ENCODE measurements at regions of chr2 and their contacts with region 1.

Region 1: GRCh38 chr2:203583701-203584100 is 48.6 kb upstream of the RAPH1 start:
- DNase-seq: no peak
- H3K4me3 ChIP-seq: no peak overlapping the region
- H3K27ac ChIP-seq: peak overlapping the region; percentile 69 to 76
- H3K4me1 ChIP-seq: peaks cover 3 to 73% (median 48%) of the 10 kb centered on the region in 4 donors
- H3K27me3 ChIP-seq: no peaks in the 10 kb centered on the region
- CTCF ChIP-seq: no peak

Region 2: GRCh38 chr2:203535078-203535783 is 48.5 kb before region 1 on chr2 and contains the start of gene RAPH1:
- intact Hi-C with region 1: loop called (anchors 5 kb)
- DNase-seq: peak; percentile 78 to 89
- H3K4me3 ChIP-seq: peak within 1 kb of the TSS; percentile 99
- H3K27ac ChIP-seq: peak within 1 kb of the TSS; percentile 90 to 95
- H3K4me1 ChIP-seq: peaks cover 0 to 35% (median 0%) of the 10 kb centered on the region in 4 donors
- H3K27me3 ChIP-seq: no peaks in the 10 kb centered on the region
- CTCF ChIP-seq: peak in 1 of 2 experiments; percentile 7

Region 3: GRCh38 chr2:203623096-203623495 is 39.4 kb after region 1 on chr2:
- intact Hi-C with region 1: no loop called
- DNase-seq: no peak
- H3K4me3 ChIP-seq: no peak overlapping the region
- H3K27ac ChIP-seq: no peak overlapping the region
- H3K4me1 ChIP-seq: peaks cover 0 to 15% (median 0%) of the 10 kb centered on the region in 4 donors
- H3K27me3 ChIP-seq: no peaks in the 10 kb centered on the region
- CTCF ChIP-seq: no peak

Region 4: GRCh38 chr2:203683932-203684556 is 100.3 kb after region 1 on chr2:
- intact Hi-C with region 1: loop called (anchors 10 kb)
- DNase-seq: peak in 1 of 2 donors; percentile 52
- H3K4me3 ChIP-seq: no peak overlapping the region
- H3K27ac ChIP-seq: peak overlapping the region; percentile 76 to 79
- H3K4me1 ChIP-seq: peaks cover 5 to 86% (median 57%) of the 10 kb centered on the region in 4 donors
- H3K27me3 ChIP-seq: no peaks in the 10 kb centered on the region
- CTCF ChIP-seq: no peak

Measured in tibial artery (tissue), 4 donors.